ENCODE measurements at regions of chr5 and their contacts with region 1.

Region 1: DNA sequence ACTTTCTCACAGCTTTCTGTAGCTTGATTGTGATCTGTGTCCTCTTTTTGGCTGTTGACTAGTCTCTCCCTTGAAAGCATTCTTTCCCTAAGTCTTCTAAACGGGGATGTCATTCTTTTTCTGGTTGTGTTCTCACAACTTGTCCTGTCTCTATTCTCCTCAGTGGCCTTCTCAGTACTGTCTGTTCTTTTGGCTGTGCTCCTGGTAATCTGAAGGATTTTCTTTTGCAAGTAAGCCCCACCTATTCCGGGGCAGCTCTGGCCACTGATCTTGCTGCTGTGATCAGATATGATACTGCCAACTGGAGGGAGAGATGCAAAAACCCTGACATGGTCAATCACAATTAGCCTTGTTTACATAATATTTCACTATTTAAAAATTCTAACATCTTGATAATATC is 172.2 kb downstream of the CDC42SE2 start:
- DNase-seq: no peak
- H3K4me3 ChIP-seq: no peak overlapping the region
- H3K27me3 ChIP-seq: no peaks in the 10 kb centered on the region
- CTCF ChIP-seq: no peak

Region 2: GRCh38 chr5:131423056-131423455 is 13.0 kb before region 1 on chr5:
- CTCF ChIA-PET with region 1: interaction called, 14 read pairs
- POLR2A ChIA-PET with region 1: no interaction called
- DNase-seq: no peak
- H3K4me3 ChIP-seq: no peak overlapping the region
- H3K27me3 ChIP-seq: no peaks in the 10 kb centered on the region
- CTCF ChIP-seq: peak; percentile 49